ENCODE measurements at regions of chr10 and their contacts with region 1.

Region 1: GRCh38 chr10:80444646-80445319 is 9.3 kb upstream of the TSPAN14 start:
- DNase-seq: peak; percentile 73 to 82
- H3K4me3 ChIP-seq: no peak overlapping the region
- H3K27ac ChIP-seq: no peak overlapping the region
- H3K4me1 ChIP-seq: no peaks in the 10 kb centered on the region
- H3K27me3 ChIP-seq: no peaks in the 10 kb centered on the region
- CTCF ChIP-seq: peak; percentile 95 to 97

Region 2: GRCh38 chr10:79981450-79982361 is 463.1 kb before region 1 on chr10:
- intact Hi-C with region 1: no loop called
- DNase-seq: peak; percentile 50 to 71
- H3K4me3 ChIP-seq: peak overlapping the region; percentile 63 to 96
- H3K27ac ChIP-seq: peak overlapping the region; percentile 82 to 98
- H3K4me1 ChIP-seq: peaks cover 0 to 29% (median 5%) of the 10 kb centered on the region in 4 donors
- H3K27me3 ChIP-seq: peaks cover 0 to 4% of the 10 kb centered on the region in 2 donors
- CTCF ChIP-seq: peak in 1 of 2 experiments; percentile 21

Region 3: DNA sequence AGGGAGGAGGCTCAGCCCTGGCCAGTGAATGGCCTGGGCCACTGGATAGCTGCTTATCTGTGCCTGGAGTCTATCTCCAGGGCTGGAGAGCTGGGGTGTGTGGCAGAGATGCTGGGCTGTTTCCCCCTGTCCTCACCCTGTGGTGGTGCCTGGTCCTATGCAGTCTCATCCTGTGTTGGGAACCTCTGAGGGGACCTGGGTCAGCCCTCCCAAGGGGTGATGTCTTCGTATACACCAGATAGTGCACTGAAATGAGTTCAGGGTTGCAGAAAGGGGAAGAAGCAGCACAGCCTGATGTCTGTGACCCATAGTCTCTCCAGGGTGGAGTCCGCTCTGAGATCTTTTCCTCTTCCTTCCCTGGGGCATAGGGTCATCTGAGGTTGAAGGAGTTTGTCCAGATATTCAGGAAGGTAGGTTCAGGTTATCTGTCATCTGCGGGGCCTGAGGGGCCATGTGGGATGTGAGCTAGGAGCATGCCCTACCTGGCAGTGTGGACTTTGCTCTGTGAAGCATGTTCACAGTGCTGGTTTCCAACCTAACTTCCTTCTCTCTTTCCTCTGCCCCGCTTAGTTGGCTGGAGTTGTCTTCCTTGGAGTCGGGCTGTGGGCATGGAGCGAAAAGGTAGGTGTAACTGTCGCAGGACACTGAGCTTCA is 59.5 kb after region 1 on chr10:
- intact Hi-C with region 1: loop called (anchors 2 kb)
- DNase-seq: no peak
- H3K4me3 ChIP-seq: no peak overlapping the region
- H3K27ac ChIP-seq: peak overlapping the region in 1 of 2 donors; percentile 8
- H3K4me1 ChIP-seq: peaks cover 5 to 61% (median 34%) of the 10 kb centered on the region in 4 donors
- H3K27me3 ChIP-seq: no peaks in the 10 kb centered on the region
- CTCF ChIP-seq: no peak

Region 4: DNA sequence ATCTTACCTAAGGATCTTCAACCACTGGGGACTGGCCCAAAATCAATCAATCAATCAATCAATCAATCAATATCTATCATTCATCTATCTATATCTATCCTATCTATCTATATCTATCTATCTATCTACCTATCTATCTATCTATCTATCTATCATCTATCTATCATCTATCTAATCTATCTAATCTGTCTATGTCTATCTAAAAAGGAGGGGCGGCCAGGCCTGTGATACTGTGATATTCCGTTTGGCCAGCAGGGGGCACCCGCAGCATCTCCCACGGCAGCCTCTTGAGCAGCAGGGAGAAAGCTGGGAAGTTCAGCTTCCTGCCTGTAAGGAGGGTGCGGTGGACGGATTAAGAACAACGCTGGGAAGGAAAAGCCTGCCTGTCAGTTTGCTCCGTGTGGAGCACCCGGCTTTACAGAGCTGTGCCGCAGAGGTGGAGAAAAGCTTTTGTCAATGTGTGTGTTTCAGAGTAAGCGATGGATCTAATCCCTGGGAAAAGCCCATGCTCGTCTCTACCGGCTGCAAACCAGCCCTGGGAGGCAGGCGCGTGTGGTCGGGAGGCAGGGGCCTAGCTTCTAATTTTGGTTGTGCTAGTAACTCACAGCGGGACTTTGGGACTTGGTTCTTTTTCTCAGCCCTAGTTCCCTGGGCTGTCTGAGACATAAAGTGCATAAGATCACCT is 217.9 kb after region 1 on chr10:
- intact Hi-C with region 1: loop called (anchors 10 kb)
- DNase-seq: peak; percentile 80 to 87
- H3K4me3 ChIP-seq: peak overlapping the region; percentile 33 to 36
- H3K27ac ChIP-seq: peak overlapping the region; percentile 44 to 69
- H3K4me1 ChIP-seq: peaks cover 0 to 14% (median 11%) of the 10 kb centered on the region in 4 donors
- H3K27me3 ChIP-seq: peaks cover 0 to 8% of the 10 kb centered on the region in 2 donors
- CTCF ChIP-seq: peak; percentile 86

Measured in tibial artery (tissue), 4 donors.